Dorsolateral prefrontal cortex (tissue), 120 donors: ENCODE measurements at regions of chr4 and their contacts with region 1.

Region 1: DNA sequence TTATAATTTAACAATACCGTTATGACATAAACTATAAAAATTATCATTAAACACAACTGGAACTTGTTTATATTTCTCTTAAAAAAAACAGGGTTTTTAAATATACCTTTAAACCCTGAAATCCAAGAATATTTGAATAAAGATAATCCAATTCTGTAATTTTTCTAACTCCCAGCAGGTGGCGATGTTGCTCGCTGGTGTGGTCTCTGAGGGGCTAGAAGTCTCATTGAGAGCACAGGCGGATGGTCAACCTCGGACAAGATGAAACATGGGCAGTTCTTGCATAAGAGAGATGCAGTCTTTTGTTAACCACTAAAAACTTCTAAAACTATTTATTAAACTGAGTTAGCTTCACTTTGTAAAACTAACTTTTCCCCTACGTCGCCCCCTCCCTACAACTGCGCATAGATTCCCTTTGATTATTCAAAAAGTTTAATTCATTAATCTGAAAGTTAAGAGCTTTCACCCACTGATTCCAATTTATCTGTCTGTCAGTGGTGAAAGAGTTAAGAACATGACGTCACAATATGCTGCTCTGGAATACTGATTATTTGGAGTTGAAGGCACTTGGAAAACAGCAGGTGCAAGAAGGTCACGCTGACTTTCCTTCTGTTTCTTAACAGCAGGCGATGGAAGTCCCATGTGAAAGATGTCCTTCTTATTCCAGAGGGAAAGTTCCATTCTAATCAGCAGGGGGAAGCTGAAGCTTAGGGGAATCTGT is 29.5 kb downstream of the DMP1 start:
- DNase-seq: peak in 7 of 10 donors; percentile 38 to 59 (median 49)
- H3K4me3 ChIP-seq: peak overlapping the region in 40 of 59 donors; percentile 0 to 53 (median 22)
- H3K27ac ChIP-seq: peak overlapping the region in 56 of 59 donors; percentile 3 to 84 (median 70)
- H3K27me3 ChIP-seq: no peaks in the 10 kb centered on the region
- CTCF ChIP-seq: peak; percentile 76 to 99 (median 88)

Region 2: GRCh38 chr4:87838890-87839591 is 159.4 kb after region 1 on chr4:
- intact Hi-C with region 1: loop called (anchors 2 to 5 kb)
- DNase-seq: peak in 7 of 10 donors; percentile 23 to 63 (median 48)
- H3K4me3 ChIP-seq: peak overlapping the region in 1 of 59 donors; percentile 5
- H3K27ac ChIP-seq: peak overlapping the region; percentile 33 to 98 (median 93)
- H3K27me3 ChIP-seq: no peaks in the 10 kb centered on the region
- CTCF ChIP-seq: peak; percentile 71 to 93 (median 85)

Region 3: DNA sequence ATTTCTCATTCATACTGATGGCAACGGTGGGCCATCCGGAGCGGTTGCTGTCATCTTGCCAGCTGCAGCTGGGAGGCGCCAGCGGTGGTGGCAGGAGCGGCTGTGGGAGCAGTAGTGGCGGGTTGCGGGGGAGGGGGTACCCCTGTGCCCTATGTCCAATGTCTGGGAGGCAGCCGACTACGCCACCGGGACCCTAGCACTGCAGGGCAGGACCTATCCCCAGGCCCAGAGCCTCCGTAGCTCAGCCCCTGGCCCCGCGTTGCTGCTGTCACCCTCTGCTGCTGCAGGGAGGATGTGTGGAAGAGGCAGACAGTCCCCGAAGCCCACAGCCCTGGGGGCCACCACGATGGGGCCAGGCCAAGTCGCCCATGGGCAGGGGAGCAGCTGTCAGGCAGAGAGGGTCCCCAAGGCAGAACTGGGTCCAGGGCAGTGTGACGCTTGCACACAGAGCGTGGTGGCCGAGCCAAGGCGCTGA is 285.9 kb after region 1 on chr4:
- intact Hi-C with region 1: loop called (anchors 5 kb)
- DNase-seq: no peak
- H3K4me3 ChIP-seq: no peak overlapping the region
- H3K27ac ChIP-seq: no peak overlapping the region
- H3K27me3 ChIP-seq: no peaks in the 10 kb centered on the region
- CTCF ChIP-seq: no peak

Region 4: DNA sequence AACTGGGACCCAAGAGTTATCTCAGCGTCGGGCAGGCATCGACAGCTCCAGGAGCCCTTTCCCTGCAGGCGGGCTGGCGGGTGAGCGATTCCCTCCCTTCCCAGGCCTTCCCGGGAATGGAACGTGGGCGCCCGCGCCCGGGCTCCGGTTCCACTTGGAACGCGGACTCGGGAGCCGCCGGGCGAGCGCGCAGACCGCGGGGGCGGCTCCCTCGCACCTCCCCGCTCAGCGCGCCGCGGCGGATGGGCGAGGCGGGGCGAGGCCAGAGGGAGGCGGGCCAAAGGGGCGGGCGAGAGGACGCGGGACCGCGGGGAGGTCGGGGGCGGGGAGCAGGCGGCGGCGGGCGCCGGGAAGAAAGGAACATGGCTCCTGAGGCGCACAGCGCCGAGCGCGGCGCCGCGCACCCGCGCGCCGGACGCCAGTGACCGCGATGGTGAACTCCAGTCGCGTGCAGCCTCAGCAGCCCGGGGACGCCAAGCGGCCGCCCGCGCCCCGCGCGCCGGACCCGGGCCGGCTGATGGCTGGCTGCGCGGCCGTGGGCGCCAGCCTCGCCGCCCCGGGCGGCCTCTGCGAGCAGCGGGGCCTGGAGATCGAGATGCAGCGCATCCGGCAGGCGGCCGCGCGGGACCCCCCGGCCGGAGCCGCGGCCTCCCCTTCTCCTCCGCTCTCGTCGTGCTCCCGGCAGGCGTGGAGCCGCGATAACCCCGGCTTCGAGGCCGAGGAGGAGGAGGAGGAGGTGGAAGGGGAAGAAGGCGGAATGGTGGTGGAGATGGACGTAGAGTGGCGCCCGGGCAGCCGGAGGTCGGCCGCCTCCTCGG is 327.9 kb after region 1 on chr4 and contains the start of gene PKD2:
- intact Hi-C with region 1: loop called in 1 of 2 experiments (anchors 10 kb)
- DNase-seq: peak; percentile 76 to 93 (median 84)
- H3K4me3 ChIP-seq: peak within 1 kb of the TSS; percentile 64 to 94 (median 84)
- H3K27ac ChIP-seq: peak within 1 kb of the TSS; percentile 64 to 97 (median 91)
- H3K27me3 ChIP-seq: no peaks in the 10 kb centered on the region
- CTCF ChIP-seq: peak in 11 of 56 donors; percentile 9 to 30 (median 16)
- total RNA-seq, gene PKD2: 29.7 to 60.9 (median 40.7) TPM